ENCODE measurements at regions of chr1 and their contacts with region 1.

Region 1: DNA sequence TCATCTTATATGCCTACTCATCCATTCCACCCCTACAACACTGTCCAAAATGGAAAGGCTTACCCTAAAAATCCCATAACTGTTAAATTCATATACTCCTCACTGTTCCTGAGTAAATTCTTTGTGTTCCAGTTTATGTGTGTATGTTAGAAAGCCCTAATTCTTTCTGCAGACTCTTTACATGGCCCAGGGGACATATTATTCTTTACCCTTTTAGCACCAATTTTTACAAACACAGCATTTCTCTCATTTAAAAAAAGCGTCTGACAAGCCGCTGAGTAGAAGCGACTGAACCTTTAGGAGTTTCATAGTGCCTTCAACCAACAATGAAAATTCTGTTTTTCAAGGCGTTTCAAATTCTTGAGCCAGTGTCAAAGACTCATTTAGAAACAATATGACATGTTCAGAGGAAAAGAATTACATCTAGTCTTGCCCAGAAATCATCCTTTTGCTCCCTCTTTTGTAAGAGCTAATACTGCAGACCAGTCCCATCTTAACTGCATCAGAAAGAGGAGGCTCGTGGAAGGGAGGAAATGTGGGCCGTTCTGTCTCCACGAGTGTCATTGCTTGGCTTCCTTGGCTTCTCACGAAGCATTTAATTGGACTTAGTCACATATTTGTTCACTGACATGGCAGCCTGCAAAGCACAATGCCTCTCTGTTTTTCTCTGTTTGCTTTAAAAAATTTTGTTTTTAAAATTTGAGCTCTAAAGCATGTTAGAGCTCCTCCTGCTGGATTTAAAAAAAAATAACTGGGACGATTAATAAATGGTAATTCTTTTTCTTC is 21.3 kb upstream of the C1orf105 start:
- DNase-seq: peak; percentile 89
- H3K4me3 ChIP-seq: no peak overlapping the region
- H3K27ac ChIP-seq: peak overlapping the region; percentile 69
- H3K4me1 ChIP-seq: peaks cover 23% of the 10 kb centered on the region
- H3K27me3 ChIP-seq: no peaks in the 10 kb centered on the region
- CTCF ChIP-seq: peak; percentile 20 to 40
- POLR2A ChIP-seq: no peak

Region 2: GRCh38 chr1:172041742-172042141 is 357.4 kb before region 1 on chr1:
- CTCF ChIA-PET with region 1: interaction called, 12 read pairs
- POLR2A ChIA-PET with region 1: no interaction called
- dilution Hi-C with region 1: no loop called
- intact Hi-C with region 1: loop called (anchors 1 kb)
- DNase-seq: peak; percentile 45
- H3K4me3 ChIP-seq: no peak overlapping the region
- H3K27ac ChIP-seq: no peak overlapping the region
- H3K4me1 ChIP-seq: peaks cover 14% of the 10 kb centered on the region
- H3K27me3 ChIP-seq: no peaks in the 10 kb centered on the region
- CTCF ChIP-seq: peak; percentile 7 to 12
- POLR2A ChIP-seq: no peak

Region 3: GRCh38 chr1:172135076-172135672 is 264.0 kb before region 1 on chr1:
- CTCF ChIA-PET with region 1: interaction called, 32 read pairs
- POLR2A ChIA-PET with region 1: no interaction called
- dilution Hi-C with region 1: no loop called
- intact Hi-C with region 1: loop called (anchors 1 kb)
- DNase-seq: no peak
- H3K4me3 ChIP-seq: no peak overlapping the region
- H3K27ac ChIP-seq: no peak overlapping the region
- H3K4me1 ChIP-seq: peaks cover 13% of the 10 kb centered on the region
- H3K27me3 ChIP-seq: no peaks in the 10 kb centered on the region
- CTCF ChIP-seq: peak; percentile 32 to 44
- POLR2A ChIP-seq: no peak

Region 4: GRCh38 chr1:172154551-172154950 is 244.6 kb before region 1 on chr1:
- CTCF ChIA-PET with region 1: interaction called, 13 read pairs
- POLR2A ChIA-PET with region 1: no interaction called
- dilution Hi-C with region 1: no loop called
- intact Hi-C with region 1: no loop called
- DNase-seq: peak; percentile 75
- H3K4me3 ChIP-seq: peak overlapping the region in 1 of 3 experiments; percentile 40
- H3K27ac ChIP-seq: peak overlapping the region; percentile 74
- H3K4me1 ChIP-seq: peaks cover 12% of the 10 kb centered on the region
- H3K27me3 ChIP-seq: no peaks in the 10 kb centered on the region
- CTCF ChIP-seq: no peak
- POLR2A ChIP-seq: no peak

Region 5: GRCh38 chr1:172254521-172255222 is 144.5 kb before region 1 on chr1:
- CTCF ChIA-PET with region 1: interaction called, 8 read pairs
- POLR2A ChIA-PET with region 1: no interaction called
- dilution Hi-C with region 1: no loop called
- intact Hi-C with region 1: loop called (anchors 1 kb)
- DNase-seq: peak; percentile 72
- H3K4me3 ChIP-seq: no peak overlapping the region
- H3K27ac ChIP-seq: peak overlapping the region; percentile 99
- H3K4me1 ChIP-seq: peaks cover 20% of the 10 kb centered on the region
- H3K27me3 ChIP-seq: no peaks in the 10 kb centered on the region
- CTCF ChIP-seq: no peak
- POLR2A ChIP-seq: no peak

Region 6: DNA sequence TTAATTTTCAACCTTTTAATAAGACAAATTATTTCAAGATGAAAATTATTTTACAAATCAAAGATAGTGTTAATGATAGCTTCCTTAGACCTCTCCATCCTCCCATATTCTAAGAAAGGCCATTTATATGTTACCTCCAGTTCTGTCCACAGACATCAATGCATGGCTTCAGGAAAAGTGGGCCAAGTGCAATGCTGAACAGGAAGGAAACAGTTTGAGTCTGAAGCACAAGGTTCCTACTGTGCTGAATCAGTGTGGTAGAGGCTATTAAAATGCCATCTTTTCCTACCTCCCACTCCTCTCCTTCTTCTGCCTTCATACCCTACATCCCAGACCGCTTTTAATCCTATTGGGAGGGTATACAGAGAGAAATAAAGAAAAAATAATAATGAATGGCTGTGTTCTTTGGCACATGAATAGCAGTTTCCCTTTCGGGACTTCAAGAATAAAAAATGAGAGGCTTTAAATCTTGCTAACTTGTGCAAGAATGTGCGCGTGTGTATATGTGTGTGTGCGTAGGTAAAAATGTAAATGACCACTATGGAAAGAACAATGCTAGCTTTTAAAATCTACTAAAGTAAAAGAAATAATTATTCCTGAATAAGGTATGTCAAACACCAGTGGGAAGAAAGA is 41.3 kb before region 1 on chr1:
- CTCF ChIA-PET with region 1: interaction called, 36 read pairs
- POLR2A ChIA-PET with region 1: no interaction called
- dilution Hi-C with region 1: no loop called
- intact Hi-C with region 1: loop called (anchors 1 kb)
- DNase-seq: peak; percentile 76
- H3K4me3 ChIP-seq: peak overlapping the region in 1 of 3 experiments; percentile 36
- H3K27ac ChIP-seq: peak overlapping the region; percentile 95
- H3K4me1 ChIP-seq: peaks cover 48% of the 10 kb centered on the region
- H3K27me3 ChIP-seq: no peaks in the 10 kb centered on the region
- CTCF ChIP-seq: no peak
- POLR2A ChIP-seq: no peak

Region 7: DNA sequence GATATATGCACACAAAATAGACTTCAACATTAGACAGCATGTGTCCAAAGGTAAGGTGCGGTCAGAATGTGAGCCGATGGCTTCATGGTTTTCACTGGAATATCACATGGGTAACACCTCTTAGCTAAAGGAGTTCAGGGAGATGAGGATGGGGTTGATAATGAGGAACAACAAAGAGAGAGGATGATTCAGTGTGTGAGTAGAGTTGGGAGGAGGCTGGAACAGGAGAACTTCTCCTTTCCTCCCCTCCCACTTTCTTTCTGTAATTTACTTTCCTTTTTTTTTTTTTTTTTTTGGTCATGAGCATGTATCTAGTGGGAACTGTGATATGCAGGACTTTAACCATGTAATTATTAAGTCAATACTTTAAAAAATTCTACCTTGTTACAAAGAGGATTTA is 359.1 kb after region 1 on chr1:
- CTCF ChIA-PET with region 1: no interaction called
- POLR2A ChIA-PET with region 1: no interaction called
- dilution Hi-C with region 1: no loop called
- intact Hi-C with region 1: no loop called
- DNase-seq: no peak
- H3K4me3 ChIP-seq: no peak overlapping the region
- H3K27ac ChIP-seq: no peak overlapping the region
- H3K4me1 ChIP-seq: peaks cover 13% of the 10 kb centered on the region
- H3K27me3 ChIP-seq: no peaks in the 10 kb centered on the region
- CTCF ChIP-seq: no peak
- POLR2A ChIP-seq: no peak

Measured in endothelial cell of umbilical vein (primary cell).